ENCODE measurements at regions of chr3 and their contacts with region 1.

Region 1: GRCh38 chr3:39189959-39190269 is 2.5 kb downstream of the XIRP1 start:
- DNase-seq: peak; percentile 67
- H3K4me3 ChIP-seq: no peak overlapping the region
- H3K27ac ChIP-seq: no peak overlapping the region
- H3K4me1 ChIP-seq: no peaks in the 10 kb centered on the region
- H3K27me3 ChIP-seq: no peaks in the 10 kb centered on the region
- CTCF ChIP-seq: peak; percentile 74 to 78
- POLR2A ChIP-seq: no peak

Region 2: DNA sequence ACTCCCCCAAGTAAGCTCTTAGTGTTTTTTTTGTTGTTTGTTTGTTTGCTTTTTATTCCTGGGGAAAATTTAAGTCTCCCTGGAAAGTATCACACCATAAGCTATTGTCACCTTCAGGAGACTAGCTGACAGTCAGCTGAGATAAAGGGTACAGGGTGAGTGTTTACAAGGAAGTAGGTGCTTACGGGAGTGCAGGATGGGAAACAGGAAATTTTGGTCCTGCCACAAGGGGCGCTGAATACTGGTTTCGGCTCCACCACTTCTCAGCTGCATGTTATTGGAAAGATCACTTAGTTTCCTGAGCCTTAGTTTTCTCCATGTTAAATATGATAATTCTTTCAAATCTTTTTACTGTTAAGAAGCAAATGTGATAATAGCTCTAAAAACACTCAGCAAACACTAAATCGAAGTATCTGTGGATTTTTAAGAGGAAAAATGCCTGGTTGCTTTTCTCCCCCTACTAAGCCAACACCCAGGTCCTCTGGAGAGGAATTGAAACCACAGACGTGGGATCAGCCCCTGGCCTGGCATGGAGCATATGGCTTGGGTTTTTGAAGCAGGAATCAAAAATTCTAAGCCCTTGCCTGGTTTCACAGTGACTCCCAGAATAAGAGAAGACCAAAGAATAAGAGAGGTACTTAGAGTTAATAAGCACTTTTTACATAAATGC is 228.8 kb before region 1 on chr3:
- CTCF ChIA-PET with region 1: no interaction called
- POLR2A ChIA-PET with region 1: no interaction called
- dilution Hi-C with region 1: no loop called
- intact Hi-C with region 1: no loop called
- DNase-seq: peak; percentile 57
- H3K4me3 ChIP-seq: no peak overlapping the region
- H3K27ac ChIP-seq: no peak overlapping the region
- H3K4me1 ChIP-seq: no peaks in the 10 kb centered on the region
- H3K27me3 ChIP-seq: peaks cover 3 to 4% of the 10 kb centered on the region in 2 experiments
- CTCF ChIP-seq: peak; percentile 74 to 76
- POLR2A ChIP-seq: no peak

Region 3: DNA sequence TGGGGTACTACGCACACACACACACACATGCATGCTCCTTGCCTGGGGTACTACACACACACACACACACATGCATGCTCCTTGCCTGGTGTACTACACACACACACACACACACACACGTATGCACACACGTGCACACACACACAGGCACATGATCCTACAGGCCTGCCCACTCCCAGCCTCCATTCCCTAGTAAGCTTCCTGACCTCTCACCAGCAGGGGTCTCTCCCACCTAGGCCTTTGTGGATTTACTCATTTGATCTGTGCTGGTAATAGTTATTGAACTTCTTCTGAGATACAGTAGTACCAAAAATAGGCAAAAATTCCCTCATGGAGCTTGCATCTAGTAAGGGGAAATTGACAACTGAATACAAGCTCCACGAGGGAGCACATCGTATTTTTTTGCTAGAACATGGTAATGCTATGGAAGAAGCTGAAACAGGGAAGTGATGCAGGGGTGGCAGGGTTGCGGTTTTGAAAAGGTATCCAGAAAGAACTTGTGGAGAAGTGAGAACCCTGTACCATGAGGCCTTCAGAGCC is 63.3 kb before region 1 on chr3:
- CTCF ChIA-PET with region 1: interaction called, 172 read pairs
- POLR2A ChIA-PET with region 1: no interaction called
- dilution Hi-C with region 1: no loop called
- intact Hi-C with region 1: loop called (anchors 1 kb)
- DNase-seq: peak; percentile 73
- H3K4me3 ChIP-seq: no peak overlapping the region
- H3K27ac ChIP-seq: no peak overlapping the region
- H3K4me1 ChIP-seq: peaks cover 10% of the 10 kb centered on the region
- H3K27me3 ChIP-seq: no peaks in the 10 kb centered on the region
- CTCF ChIP-seq: peak; percentile 53 to 76
- POLR2A ChIP-seq: no peak

Region 4: DNA sequence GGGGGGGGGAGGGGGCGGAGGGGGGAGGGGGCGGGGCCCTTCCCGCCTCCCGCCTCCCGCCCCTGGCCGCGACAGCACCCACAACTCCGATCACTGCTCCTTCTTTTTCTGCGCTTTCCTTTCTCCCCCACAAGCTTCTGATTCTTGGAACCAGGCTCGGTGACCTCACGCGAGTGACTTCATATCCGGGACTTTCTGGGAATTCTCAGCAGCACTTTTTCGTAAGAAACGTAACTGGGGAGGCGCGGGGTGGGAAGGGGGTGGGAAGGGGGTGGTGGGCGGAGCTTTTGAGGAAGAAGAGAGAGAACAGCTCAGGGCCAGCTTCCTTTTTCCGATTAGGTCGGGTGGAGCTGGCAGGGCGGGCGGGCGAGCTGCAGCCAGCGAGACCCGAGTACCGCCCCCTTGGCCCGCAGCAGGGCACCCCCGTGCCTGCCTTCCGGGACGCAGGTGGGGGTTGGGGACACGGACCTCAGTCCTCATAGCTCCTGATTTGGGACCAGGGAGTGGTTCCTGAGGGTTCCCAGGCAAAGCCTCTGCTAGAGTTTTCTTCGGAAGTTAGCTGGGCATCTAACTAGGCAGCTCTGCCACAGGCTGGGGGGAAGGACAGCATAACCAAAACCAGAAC is 12.1 kb before region 1 on chr3:
- CTCF ChIA-PET with region 1: interaction called, 17 read pairs
- POLR2A ChIA-PET with region 1: interaction called, 4 read pairs
- dilution Hi-C with region 1: no loop called
- intact Hi-C with region 1: no loop called
- DNase-seq: peak; percentile 95
- H3K4me3 ChIP-seq: peak overlapping the region in 2 of 3 experiments; percentile 41 to 55
- H3K27ac ChIP-seq: peak overlapping the region; percentile 96
- H3K4me1 ChIP-seq: peaks cover 25% of the 10 kb centered on the region
- H3K27me3 ChIP-seq: no peaks in the 10 kb centered on the region
- CTCF ChIP-seq: no peak
- POLR2A ChIP-seq: peak; percentile 37

Region 5: GRCh38 chr3:39249453-39250115 is 59.7 kb after region 1 on chr3:
- CTCF ChIA-PET with region 1: no interaction called
- POLR2A ChIA-PET with region 1: no interaction called
- dilution Hi-C with region 1: no loop called
- intact Hi-C with region 1: no loop called
- DNase-seq: no peak
- H3K4me3 ChIP-seq: no peak overlapping the region
- H3K27ac ChIP-seq: no peak overlapping the region
- H3K4me1 ChIP-seq: no peaks in the 10 kb centered on the region
- H3K27me3 ChIP-seq: peaks cover 0 to 2% of the 10 kb centered on the region in 2 experiments
- CTCF ChIP-seq: no peak
- POLR2A ChIP-seq: no peak

Region 6: DNA sequence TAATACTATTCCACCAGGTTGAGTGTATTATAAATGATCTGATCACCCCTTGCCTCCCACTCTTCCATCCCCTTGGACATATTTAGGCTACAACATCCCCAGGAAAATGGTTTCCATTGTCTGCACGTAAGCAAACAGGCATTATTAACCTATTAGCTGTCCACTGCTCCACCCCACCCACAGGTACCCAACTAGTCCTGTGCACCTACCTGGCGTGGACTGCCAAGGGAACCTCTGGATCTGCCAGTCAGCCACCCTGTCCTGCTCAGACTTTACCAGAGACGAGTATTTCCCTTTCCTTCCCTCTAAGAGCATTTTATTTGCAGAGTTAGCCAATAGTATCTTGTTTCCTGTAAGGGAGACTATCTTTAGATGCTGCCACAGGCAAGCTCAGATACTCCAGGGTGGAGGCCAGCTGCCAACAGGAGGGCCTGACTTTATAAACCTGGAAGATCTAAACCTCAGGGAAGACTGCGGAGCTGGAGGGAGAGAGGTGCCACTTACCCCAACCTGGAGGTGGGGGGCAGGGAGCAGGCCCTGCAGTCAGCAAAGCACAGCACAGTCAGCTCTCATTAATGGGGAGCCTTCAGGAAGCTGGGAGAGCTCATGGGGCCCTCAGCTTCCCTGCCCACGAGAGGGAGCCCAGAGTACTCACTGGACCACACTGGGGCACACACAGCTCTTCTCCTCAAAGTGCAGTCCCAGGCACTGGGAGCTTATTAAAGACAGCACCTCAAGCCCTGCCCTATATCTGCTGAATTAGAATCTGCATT is 90.0 kb after region 1 on chr3 and contains the start of gene CX3CR1:
- CTCF ChIA-PET with region 1: interaction called, 183 read pairs
- POLR2A ChIA-PET with region 1: no interaction called
- dilution Hi-C with region 1: no loop called
- intact Hi-C with region 1: no loop called
- DNase-seq: no peak
- H3K4me3 ChIP-seq: no peak within 1 kb of the TSS
- H3K27ac ChIP-seq: no peak within 1 kb of the TSS
- H3K4me1 ChIP-seq: peaks cover 5% of the 10 kb centered on the region
- H3K27me3 ChIP-seq: peaks cover 3 to 5% of the 10 kb centered on the region in 2 experiments
- CTCF ChIP-seq: no peak
- POLR2A ChIP-seq: no peak
- total RNA-seq, gene CX3CR1: not detected in 2 replicates

Measured in endothelial cell of umbilical vein (primary cell).